ENCODE measurements at regions of chr4 and their contacts with region 1.

Region 1: DNA sequence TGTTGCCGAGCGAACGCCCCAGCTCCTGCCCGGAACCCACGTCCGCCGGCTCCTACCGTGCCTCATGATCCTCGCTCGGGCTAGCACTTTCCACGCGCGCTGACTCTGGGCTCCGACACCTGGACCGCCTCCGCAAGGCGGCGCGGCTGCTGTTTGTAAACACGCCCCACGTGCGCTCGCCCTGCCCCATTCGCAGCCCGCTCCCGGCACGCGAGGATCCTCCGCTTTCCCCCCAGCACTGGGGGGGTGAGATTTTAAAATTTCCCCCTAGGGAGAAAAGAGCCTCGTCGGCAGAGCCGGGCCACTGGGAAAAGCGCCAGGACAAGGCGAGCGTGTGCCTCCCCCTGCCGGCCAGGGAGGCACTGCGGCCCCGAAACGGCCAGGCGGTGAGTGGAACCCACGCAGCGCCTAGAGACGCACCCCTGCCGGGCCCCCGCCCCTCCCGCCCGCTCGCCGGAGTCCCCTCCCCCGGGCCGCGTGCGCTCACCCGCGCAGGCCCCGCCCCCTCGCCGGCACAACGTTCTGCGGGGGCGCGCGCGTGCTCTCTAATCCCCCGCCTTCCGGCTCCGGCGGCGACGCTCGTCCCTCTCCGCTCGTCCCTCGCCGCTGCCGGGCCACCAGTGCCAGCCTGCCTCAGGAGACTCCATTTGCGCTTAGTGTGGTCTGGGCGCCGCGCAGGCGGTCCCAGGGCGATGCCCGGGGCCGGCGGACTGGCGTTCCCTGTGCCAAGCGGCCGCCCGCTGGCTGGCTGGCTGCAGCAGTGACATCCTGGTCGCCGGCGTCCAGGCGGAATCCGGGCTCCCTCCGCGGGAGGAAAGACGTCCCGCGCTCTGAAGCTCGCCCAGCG is at the start of gene TIGD2:
- DNase-seq: peak; percentile 92 to 94
- ATAC-seq: peak; percentile 96 to 98 (median 98)
- H3K4me3 ChIP-seq: peak within 1 kb of the TSS; percentile 86
- H3K27ac ChIP-seq: peak within 1 kb of the TSS; percentile 83
- H3K4me1 ChIP-seq: peaks cover 15% of the 10 kb centered on the region
- H3K27me3 ChIP-seq: no peaks in the 10 kb centered on the region
- CTCF ChIP-seq: peak; percentile 89
- total RNA-seq, gene TIGD2: 1.5 to 4.4 (median 2.7) TPM

Region 2: GRCh38 chr4:88823058-88823919 is 287.9 kb before region 1 on chr4:
- intact Hi-C with region 1: loop called (anchors 5 to 10 kb)
- DNase-seq: peak; percentile 80 to 91
- ATAC-seq: peak; percentile 94 to 96 (median 95)
- H3K4me3 ChIP-seq: peak overlapping the region; percentile 77
- H3K27ac ChIP-seq: peak overlapping the region; percentile 93
- H3K4me1 ChIP-seq: peaks cover 33% of the 10 kb centered on the region
- H3K27me3 ChIP-seq: no peaks in the 10 kb centered on the region
- CTCF ChIP-seq: no peak

Region 3: GRCh38 chr4:89056953-89057398 is 54.2 kb before region 1 on chr4 and contains the start of gene FAM13A:
- intact Hi-C with region 1: loop called in 1 of 2 experiments (anchors 2 kb)
- DNase-seq: peak; percentile 61 to 82
- ATAC-seq: peak; percentile 95 to 100 (median 98)
- H3K4me3 ChIP-seq: peak within 1 kb of the TSS; percentile 66
- H3K27ac ChIP-seq: peak within 1 kb of the TSS; percentile 81
- H3K4me1 ChIP-seq: peaks cover 16% of the 10 kb centered on the region
- H3K27me3 ChIP-seq: no peaks in the 10 kb centered on the region
- CTCF ChIP-seq: no peak
- total RNA-seq, gene FAM13A: 15.2 to 76.0 (median 35.1) TPM